ENCODE measurements at regions of chr16 and their contacts with region 1.

Region 1: GRCh38 chr16:1929578-1930337 is 11.5 kb upstream of the HS3ST6 start:
- DNase-seq: peak; percentile 93 to 96
- H3K4me3 ChIP-seq: peak overlapping the region; percentile 58 to 68 (median 64)
- H3K27ac ChIP-seq: peak overlapping the region; percentile 14 to 86 (median 81)
- H3K4me1 ChIP-seq: peaks cover 0 to 23% (median 14%) of the 10 kb centered on the region in 4 donors
- H3K27me3 ChIP-seq: peaks cover 0 to 26% (median 0%) of the 10 kb centered on the region in 3 donors
- CTCF ChIP-seq: peak in 5 of 7 experiments; percentile 73 to 100 (median 100)
- EP300 ChIP-seq: no peak
- POLR2A ChIP-seq: no peak

Region 2: GRCh38 chr16:1656808-1657617 is 272.7 kb before region 1 on chr16:
- intact Hi-C with region 1: no loop called
- DNase-seq: peak in 1 of 2 donors; percentile 68
- H3K4me3 ChIP-seq: no peak overlapping the region
- H3K27ac ChIP-seq: no peak overlapping the region
- H3K4me1 ChIP-seq: peaks cover 0 to 5% (median 0%) of the 10 kb centered on the region in 4 donors
- H3K27me3 ChIP-seq: no peaks in the 10 kb centered on the region
- CTCF ChIP-seq: no peak
- EP300 ChIP-seq: no peak
- POLR2A ChIP-seq: no peak

Region 3: DNA sequence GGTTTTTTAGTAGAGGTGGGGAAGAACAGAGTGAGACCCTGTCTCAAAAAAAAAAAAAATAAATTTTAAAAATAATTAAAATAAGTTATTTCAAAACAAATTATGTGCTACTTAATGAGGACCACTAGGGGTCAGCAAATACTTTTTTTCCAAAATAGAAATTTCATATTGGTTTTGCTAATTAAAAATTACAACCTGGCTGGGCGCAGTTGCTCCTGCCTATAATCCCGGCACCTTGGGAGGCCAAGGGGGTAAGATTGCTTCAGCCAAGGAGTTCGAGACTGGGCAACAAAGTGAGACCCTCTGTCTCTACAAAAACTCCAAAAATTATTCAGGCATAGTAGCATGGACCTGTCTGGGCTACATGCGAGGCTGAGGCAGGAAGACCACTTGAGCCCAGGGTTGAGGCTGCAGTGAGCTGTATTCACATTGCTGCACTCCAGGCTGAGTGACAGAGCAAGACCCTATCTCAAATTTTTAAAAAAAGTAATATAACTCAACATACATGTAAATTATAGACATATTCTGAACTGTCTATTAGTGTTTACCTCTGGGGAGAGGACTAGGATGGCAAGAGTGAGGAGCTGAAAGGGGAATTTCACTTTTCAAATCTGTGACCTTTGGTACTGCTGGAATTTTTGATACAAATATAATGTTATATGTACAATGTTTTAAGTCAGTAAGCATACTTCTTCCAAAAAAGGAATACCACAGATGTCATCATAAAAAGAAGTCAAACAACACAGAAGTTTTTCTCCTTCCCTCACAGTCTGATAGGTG is 65.9 kb before region 1 on chr16:
- intact Hi-C with region 1: loop called (anchors 5 kb)
- DNase-seq: peak in 1 of 2 donors; percentile 69
- H3K4me3 ChIP-seq: no peak overlapping the region
- H3K27ac ChIP-seq: no peak overlapping the region
- H3K4me1 ChIP-seq: peaks cover 0 to 5% (median 0%) of the 10 kb centered on the region in 4 donors
- H3K27me3 ChIP-seq: peaks cover 0 to 67% (median 17%) of the 10 kb centered on the region in 3 donors
- CTCF ChIP-seq: peak in 4 of 7 experiments; percentile 24 to 62 (median 52)
- EP300 ChIP-seq: no peak
- POLR2A ChIP-seq: no peak

Region 4: GRCh38 chr16:1983544-1984346 is 54.0 kb after region 1 on chr16 and contains the start of gene GFER:
- intact Hi-C with region 1: no loop called
- DNase-seq: peak; percentile 91 to 97
- H3K4me3 ChIP-seq: peak within 1 kb of the TSS; percentile 77 to 83 (median 78)
- H3K27ac ChIP-seq: peak within 1 kb of the TSS; percentile 64 to 84 (median 76)
- H3K4me1 ChIP-seq: peaks cover 29 to 69% (median 64%) of the 10 kb centered on the region in 4 donors
- H3K27me3 ChIP-seq: peaks cover 4 to 56% (median 36%) of the 10 kb centered on the region in 3 donors
- CTCF ChIP-seq: peak in 2 of 7 experiments; percentile 26 to 31
- EP300 ChIP-seq: no peak
- POLR2A ChIP-seq: no peak
- total RNA-seq, gene GFER: 3.1 to 313 (median 9.9) TPM